ENCODE measurements at regions of chr12 and their contacts with region 1.

Region 1: GRCh38 chr12:49892084-49892731 is 11.5 kb downstream of the FAIM2 start:
- DNase-seq: no peak
- H3K4me3 ChIP-seq: no peak overlapping the region
- H3K27ac ChIP-seq: no peak overlapping the region
- H3K4me1 ChIP-seq: peaks cover 20% of the 10 kb centered on the region
- H3K27me3 ChIP-seq: peaks cover 5% of the 10 kb centered on the region
- CTCF ChIP-seq: no peak

Region 2: DNA sequence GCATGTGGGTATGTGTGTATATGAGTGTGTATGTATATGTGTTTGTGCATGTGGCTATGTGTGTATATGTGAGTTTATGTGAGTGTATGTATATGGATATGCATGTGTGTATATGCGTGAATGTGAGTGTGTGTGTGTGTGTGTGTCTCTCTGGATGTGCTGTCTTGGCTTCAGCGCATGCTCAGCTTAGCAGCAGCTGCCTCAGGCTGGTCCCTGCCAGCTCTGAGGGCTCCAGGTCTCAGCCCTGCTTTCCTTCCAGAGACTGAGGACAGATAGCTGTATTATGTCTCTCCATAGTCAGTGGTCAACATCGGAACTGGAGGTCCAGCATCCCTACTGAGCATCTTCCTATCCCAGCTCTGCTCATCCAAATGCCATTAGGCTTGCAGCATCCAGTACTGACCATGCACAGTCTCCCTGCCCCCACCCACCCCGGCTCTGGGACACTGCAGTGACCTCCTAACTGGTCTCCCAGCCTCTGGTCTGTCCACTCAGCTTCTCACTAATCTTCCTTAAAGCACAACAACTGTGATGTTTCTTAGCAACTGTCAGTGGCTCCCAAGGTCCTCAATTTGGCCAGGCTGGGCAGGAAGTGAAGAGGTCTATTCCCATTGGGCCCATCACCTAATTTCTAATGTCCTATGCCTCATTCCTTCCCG is 11.3 kb before region 1 on chr12:
- CTCF ChIA-PET with region 1: no interaction called
- POLR2A ChIA-PET with region 1: interaction called, 13 read pairs
- intact Hi-C with region 1: no loop called
- DNase-seq: no peak
- H3K4me3 ChIP-seq: no peak overlapping the region
- H3K27ac ChIP-seq: no peak overlapping the region
- H3K4me1 ChIP-seq: no peaks in the 10 kb centered on the region
- H3K27me3 ChIP-seq: peaks cover 4% of the 10 kb centered on the region; the same call in 1 of the 2 replicates
- CTCF ChIP-seq: no peak

Region 3: GRCh38 chr12:50016501-50017475 is 124.6 kb after region 1 on chr12:
- CTCF ChIA-PET with region 1: no interaction called
- POLR2A ChIA-PET with region 1: no interaction called
- intact Hi-C with region 1: no loop called
- DNase-seq: no peak
- H3K4me3 ChIP-seq: no peak overlapping the region
- H3K27ac ChIP-seq: no peak overlapping the region
- H3K4me1 ChIP-seq: no peaks in the 10 kb centered on the region
- H3K27me3 ChIP-seq: no peaks in the 10 kb centered on the region
- CTCF ChIP-seq: no peak